Mammary epithelial cell (primary cell): ENCODE measurements at regions of chr11 and their contacts with region 1.

Region 1: DNA sequence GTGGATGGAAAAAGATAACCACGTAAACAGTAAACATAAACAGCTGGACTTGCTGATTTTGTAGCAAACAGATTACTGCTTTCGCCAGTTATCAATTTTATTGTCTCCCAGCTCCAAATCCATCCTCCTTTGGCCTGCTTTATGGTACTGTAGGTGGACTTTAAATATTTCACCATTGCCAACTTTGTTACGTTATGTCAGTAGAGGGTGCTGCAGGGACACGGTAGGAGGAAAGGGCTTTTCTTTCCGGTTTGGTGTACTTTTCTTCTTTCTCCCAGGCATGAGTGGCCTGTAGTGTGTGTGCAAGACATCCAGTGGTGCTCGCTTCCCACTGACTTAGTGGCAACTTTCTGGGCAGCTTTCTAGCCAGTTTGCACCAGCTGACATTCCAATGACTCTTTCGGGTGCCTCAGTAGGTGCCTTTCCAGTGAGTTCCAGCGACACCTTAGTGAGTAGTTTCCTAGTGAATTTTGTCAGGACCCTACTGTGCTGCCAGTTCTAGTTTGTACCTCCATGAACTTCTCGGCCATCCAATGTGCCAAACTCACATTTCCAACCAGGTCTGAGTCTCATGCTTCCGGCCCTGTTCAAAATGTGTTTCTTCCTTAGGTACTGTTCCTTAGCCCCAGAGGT is 267.6 kb upstream of the TENM4 start:
- DNase-seq: peak; percentile 49
- H3K4me3 ChIP-seq: no peak overlapping the region
- H3K27ac ChIP-seq: no peak overlapping the region
- H3K4me1 ChIP-seq: no peaks in the 10 kb centered on the region
- H3K27me3 ChIP-seq: no peaks in the 10 kb centered on the region
- CTCF ChIP-seq: peak; percentile 65 to 80

Region 2: GRCh38 chr11:80107415-80107814 is 399.0 kb after region 1 on chr11:
- CTCF ChIA-PET with region 1: no interaction called
- dilution Hi-C with region 1: no loop called
- in situ Hi-C with region 1: no loop called
- intact Hi-C with region 1: loop called (anchors 1 kb)
- DNase-seq: no peak
- H3K4me3 ChIP-seq: no peak overlapping the region
- H3K27ac ChIP-seq: no peak overlapping the region
- H3K4me1 ChIP-seq: peaks cover 16% of the 10 kb centered on the region
- H3K27me3 ChIP-seq: no peaks in the 10 kb centered on the region
- CTCF ChIP-seq: no peak

Region 3: GRCh38 chr11:80146232-80146631 is 437.8 kb after region 1 on chr11:
- CTCF ChIA-PET with region 1: no interaction called
- dilution Hi-C with region 1: no loop called
- in situ Hi-C with region 1: loop called (anchors 10 to 25 kb)
- intact Hi-C with region 1: no loop called
- DNase-seq: peak; percentile 79
- H3K4me3 ChIP-seq: no peak overlapping the region
- H3K27ac ChIP-seq: no peak overlapping the region
- H3K4me1 ChIP-seq: peaks cover 7% of the 10 kb centered on the region
- H3K27me3 ChIP-seq: no peaks in the 10 kb centered on the region
- CTCF ChIP-seq: no peak

Region 4: DNA sequence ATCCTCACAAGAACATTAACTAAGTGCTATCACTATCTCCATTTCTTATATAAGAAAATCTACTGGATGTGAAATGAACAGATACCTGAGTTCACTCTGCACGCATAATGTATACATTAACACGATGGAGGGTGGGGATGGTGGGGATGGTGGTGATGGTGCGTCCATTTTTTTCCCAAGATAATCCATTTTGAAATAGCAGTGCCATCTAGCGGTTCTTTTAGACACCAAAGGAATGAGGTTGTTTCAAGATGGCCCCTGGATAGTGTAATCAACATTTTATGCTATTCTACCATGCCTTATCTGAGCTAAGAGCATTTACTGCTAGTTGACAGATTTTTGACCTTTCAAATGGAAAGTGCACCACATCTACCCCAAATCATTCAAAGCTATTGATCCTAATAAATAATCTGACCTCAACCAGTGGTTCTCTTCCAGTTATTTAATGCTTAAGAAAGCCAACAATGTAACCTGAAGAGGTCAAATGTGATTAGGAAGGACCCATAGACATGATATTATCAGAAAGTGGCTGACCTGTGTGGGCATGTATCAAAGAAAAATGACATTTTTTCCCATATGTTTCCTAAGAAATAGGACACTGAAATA is 447.1 kb after region 1 on chr11:
- CTCF ChIA-PET with region 1: no interaction called
- dilution Hi-C with region 1: no loop called
- in situ Hi-C with region 1: loop called in 1 of 2 experiments (anchors 10 kb)
- intact Hi-C with region 1: loop called (anchors 1 kb)
- DNase-seq: peak; percentile 17
- H3K4me3 ChIP-seq: no peak overlapping the region
- H3K27ac ChIP-seq: no peak overlapping the region
- H3K4me1 ChIP-seq: no peaks in the 10 kb centered on the region
- H3K27me3 ChIP-seq: peaks cover 2% of the 10 kb centered on the region
- CTCF ChIP-seq: peak; percentile 63 to 74

Region 5: GRCh38 chr11:80320765-80321164 is 612.3 kb after region 1 on chr11:
- CTCF ChIA-PET with region 1: no interaction called
- dilution Hi-C with region 1: no loop called
- in situ Hi-C with region 1: no loop called
- intact Hi-C with region 1: loop called (anchors 2 kb)
- DNase-seq: no peak
- H3K4me3 ChIP-seq: no peak overlapping the region
- H3K27ac ChIP-seq: no peak overlapping the region
- H3K4me1 ChIP-seq: no peaks in the 10 kb centered on the region
- H3K27me3 ChIP-seq: no peaks in the 10 kb centered on the region
- CTCF ChIP-seq: peak; percentile 31 to 52

Region 6: GRCh38 chr11:81237139-81237538 is 1528.7 kb after region 1 on chr11:
- CTCF ChIA-PET with region 1: no interaction called
- dilution Hi-C with region 1: no loop called
- in situ Hi-C with region 1: no loop called
- intact Hi-C with region 1: loop called (anchors 1 kb)
- DNase-seq: peak; percentile 28
- H3K4me3 ChIP-seq: no peak overlapping the region
- H3K27ac ChIP-seq: no peak overlapping the region
- H3K4me1 ChIP-seq: no peaks in the 10 kb centered on the region
- H3K27me3 ChIP-seq: peaks cover 2% of the 10 kb centered on the region
- CTCF ChIP-seq: peak in 1 of 2 donors; percentile 58